ENCODE measurements at regions of chr19 and their contacts with region 1.

Region 1: DNA sequence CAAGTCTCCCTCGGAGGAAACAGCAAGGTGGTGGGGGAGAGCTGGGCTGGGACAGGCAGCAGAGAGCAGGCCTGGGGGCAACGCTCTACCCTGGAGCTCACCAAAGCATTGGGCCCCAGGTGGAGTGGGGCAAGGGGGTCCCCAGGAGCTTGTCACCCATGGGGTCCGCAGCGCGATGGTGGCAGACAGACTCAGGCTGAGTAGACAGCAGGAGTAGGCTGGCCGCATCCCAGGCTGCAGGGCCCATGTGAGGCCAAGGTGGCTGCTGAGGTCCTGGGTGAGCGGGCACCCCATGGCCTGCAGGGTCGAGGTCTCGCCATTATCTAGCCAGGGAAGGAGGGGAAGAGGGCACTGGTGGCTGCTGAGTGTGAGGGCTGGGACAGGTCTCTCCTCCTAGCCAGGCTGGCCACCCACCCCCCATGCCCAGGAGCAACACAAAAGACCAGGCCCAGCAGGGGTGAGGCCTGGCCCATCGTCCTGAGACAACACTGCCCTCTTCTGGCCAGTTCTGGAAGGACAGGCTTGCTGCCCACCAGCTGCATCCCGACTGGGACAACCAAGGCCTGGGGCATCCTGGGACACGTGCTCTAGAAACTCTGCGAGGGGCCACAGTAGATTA is 33.1 kb downstream of the CEBPG start:
- DNase-seq: peak in 9 of 10 donors; percentile 57 to 83 (median 73)
- H3K4me3 ChIP-seq: no peak overlapping the region
- H3K27ac ChIP-seq: peak overlapping the region in 24 of 59 donors; percentile 12 to 82 (median 48)
- H3K27me3 ChIP-seq: no peaks in the 10 kb centered on the region
- CTCF ChIP-seq: peak; percentile 71 to 99 (median 96)

Region 2: GRCh38 chr19:33143897-33144405 is 262.7 kb before region 1 on chr19:
- intact Hi-C with region 1: loop called in 1 of 2 experiments (anchors 10 kb)
- DNase-seq: peak; percentile 34 to 75 (median 54)
- H3K4me3 ChIP-seq: peak overlapping the region in 20 of 59 donors; percentile 4 to 53 (median 20)
- H3K27ac ChIP-seq: no peak overlapping the region
- H3K27me3 ChIP-seq: peaks cover 0 to 2% (median 0%) of the 10 kb centered on the region in 45 donors
- CTCF ChIP-seq: peak; percentile 71 to 96 (median 92)

Region 3: DNA sequence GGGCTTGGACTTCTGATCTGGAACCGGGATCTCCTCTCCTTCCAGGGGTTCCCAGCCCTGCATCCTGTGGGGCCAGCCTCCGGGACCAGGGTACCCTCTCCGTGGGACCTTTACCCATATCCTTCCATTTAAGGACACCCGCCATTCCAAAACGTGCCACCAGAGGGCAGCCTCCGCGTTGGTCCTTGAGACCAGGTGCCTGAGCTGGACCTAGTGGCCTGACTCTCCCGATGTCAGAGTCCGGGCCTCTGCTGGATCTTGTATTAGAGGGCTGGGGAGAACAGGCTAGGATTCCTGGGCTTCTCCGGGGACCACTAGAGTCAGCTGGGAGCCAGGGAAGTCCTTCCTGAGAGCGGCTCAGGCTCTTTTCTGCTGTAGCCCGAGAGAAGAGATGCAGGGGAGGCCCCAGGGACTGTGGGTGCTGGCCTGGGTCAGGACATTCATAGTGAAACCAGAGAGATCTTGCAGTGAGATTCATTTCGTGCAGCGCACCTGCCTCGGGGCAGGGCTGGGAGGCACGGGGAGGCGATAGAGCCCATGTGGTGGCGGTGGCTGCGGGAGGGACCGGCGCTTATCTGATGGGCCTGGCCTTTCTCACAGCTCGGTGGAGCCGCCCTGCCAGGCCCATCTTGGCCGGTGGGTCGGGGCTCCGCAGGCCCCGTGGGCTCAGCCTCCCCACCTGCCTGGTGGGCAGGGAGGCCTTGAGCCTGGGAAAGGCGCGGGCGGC is 171.2 kb before region 1 on chr19:
- intact Hi-C with region 1: loop called in 1 of 2 experiments (anchors 2 kb)
- DNase-seq: peak; percentile 65 to 86 (median 79)
- H3K4me3 ChIP-seq: no peak overlapping the region
- H3K27ac ChIP-seq: no peak overlapping the region
- H3K27me3 ChIP-seq: peaks cover 0 to 6% (median 0%) of the 10 kb centered on the region in 45 donors
- CTCF ChIP-seq: peak; percentile 48 to 97 (median 84)

Region 4: DNA sequence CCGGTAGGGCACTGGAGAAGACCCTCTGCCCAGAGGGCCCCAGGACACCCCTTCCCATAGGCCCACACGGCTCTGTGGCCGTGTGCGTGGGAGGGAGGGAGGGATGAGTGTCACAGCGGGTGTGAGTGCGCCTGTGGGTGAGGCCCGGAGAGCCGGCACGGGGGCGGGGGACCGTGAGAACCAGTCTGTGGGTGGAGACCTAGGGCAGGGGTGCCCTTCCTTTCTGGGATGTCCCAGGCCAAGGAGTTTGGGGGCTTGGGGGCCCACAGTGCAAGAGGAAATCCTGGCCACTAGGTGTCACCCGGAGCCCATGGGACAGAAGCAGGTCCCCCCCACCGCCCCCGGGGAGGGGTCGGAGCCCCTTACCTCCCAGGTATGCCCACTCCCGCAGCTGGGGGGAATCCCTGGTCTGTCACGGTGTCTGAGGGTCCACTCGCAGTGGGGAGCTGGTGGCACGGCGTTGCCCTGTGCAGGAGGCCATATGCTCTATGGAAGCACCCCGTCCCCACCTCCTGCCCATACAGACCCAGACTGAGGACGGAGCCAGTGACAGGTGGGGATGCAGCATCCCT is 165.0 kb before region 1 on chr19:
- intact Hi-C with region 1: loop called (anchors 1 to 2 kb)
- DNase-seq: no peak
- H3K4me3 ChIP-seq: peak overlapping the region in 6 of 59 donors; percentile 2 to 23 (median 12)
- H3K27ac ChIP-seq: no peak overlapping the region
- H3K27me3 ChIP-seq: no peaks in the 10 kb centered on the region
- CTCF ChIP-seq: peak; percentile 38 to 86 (median 71)

Region 5: GRCh38 chr19:33290956-33291622 is 115.5 kb before region 1 on chr19:
- intact Hi-C with region 1: no loop called
- DNase-seq: no peak
- H3K4me3 ChIP-seq: no peak overlapping the region
- H3K27ac ChIP-seq: no peak overlapping the region
- H3K27me3 ChIP-seq: peaks cover 0 to 5% (median 0%) of the 10 kb centered on the region in 45 donors
- CTCF ChIP-seq: no peak

Region 6: GRCh38 chr19:33302175-33302973 is 104.3 kb before region 1 on chr19 and contains the start of gene CEBPA:
- intact Hi-C with region 1: loop called in 1 of 2 experiments (anchors 5 kb)
- DNase-seq: peak in 9 of 10 donors; percentile 29 to 81 (median 69)
- H3K4me3 ChIP-seq: peak within 1 kb of the TSS; percentile 47 to 83 (median 72)
- H3K27ac ChIP-seq: peak within 1 kb of the TSS in 54 of 59 donors; percentile 6 to 90 (median 75)
- H3K27me3 ChIP-seq: peaks cover 0 to 14% (median 0%) of the 10 kb centered on the region in 45 donors
- CTCF ChIP-seq: peak in 36 of 56 donors; percentile 11 to 59 (median 36)
- total RNA-seq, gene CEBPA: 6.2 to 29.6 (median 11.6) TPM

Measured in dorsolateral prefrontal cortex (tissue), 120 donors.